Right ventricle myocardium inferior (tissue), 1 donor: ENCODE measurements at regions of chr17 and their contacts with region 1.

Region 1: DNA sequence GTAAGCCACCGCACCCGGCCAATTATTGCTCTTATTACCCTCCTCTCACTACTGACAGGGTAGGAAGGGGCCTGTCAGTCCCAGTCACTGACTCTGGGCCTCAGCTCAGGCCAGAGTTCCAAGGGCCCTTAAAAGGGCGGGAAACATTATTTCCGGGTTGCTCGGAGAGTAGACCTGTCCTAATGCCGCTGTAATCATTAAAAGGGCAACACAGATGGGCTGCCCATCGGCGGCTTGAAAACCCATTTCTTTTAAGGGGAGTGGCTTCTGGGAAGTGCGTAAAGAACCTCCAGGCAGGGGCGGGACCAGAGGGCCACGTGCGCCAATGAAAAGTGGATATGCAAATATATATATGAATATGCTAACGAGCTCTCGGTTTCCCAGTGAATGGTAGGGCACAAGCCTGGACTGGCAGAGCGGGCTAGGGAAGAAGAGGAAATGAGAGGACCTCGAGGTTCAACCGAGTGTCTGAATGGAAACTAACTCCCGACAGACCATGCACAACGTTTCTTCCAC is 26.6 kb downstream of the PIPOX start:
- DNase-seq: peak; percentile 67
- ATAC-seq: peak; percentile 29

Region 2: DNA sequence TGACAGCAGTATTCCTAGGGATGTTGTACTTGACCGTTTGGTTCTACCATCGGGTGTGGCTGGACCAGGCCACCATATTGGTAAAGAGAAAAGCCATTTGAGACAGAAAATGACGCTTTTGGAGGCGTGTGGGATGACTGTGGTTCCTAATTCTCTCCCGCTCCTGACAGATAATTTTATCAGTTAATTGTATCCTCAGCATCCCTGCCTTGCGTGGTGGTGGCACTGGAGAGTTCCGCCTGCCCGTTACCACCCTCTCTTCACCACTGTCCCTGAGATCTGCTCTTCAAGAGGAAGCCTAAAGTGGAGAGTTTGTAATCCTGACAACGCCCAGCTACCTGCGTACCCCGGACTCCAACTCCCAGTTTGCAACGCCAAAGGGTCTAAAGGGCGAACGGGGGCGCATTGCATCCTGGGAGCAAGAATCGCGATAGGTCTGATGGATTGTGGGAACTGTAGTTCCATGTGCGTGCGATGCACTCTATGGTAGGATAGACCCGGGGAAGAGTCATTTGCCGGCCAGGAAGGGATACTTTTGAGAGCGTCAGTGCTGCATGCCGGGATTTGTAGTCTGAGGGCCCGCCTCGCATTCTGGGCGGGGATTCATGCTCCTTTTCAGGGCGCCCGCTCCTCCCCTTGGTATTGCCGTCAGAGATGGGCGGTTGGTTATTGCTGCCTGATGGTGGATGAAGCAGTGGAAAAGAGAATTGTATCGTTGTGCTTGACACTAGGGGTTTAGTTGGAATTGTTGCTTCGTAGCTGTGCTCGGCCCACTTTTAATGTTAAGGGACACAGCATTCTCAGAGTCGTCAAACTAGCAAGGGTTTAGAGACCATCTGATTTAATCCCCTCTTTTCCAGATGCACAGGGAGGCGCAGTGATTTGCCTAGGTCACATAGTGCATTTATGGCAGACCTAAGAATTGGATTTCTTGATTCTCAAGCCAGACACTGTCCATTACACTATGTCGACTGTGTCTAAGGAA is 117.3 kb before region 1 on chr17:
- intact Hi-C with region 1: no loop called
- DNase-seq: peak; percentile 97
- ATAC-seq: peak; percentile 88

Region 3: DNA sequence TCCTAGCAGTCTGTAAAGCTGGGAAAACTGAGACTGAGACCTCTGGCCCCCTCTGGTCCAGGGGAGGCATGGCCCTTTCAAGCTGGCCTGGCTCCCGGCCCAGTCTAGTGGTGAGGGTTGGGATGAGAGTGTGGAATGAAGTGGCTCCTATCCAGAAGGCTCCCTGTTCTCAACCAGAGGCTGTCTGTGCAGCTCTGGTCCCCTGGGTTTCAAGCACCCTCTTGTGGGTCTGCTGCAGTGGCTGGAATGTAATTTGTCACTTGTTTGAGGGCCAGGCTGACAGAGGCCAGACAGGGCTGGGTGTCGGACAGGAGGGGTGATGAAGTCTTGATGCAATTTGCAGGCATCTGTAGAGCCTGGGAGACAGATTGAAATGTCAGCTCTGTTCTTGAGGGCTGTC is 96.2 kb before region 1 on chr17:
- intact Hi-C with region 1: loop called (anchors 5 kb)
- DNase-seq: peak; percentile 90
- ATAC-seq: peak; percentile 86

Region 4: GRCh38 chr17:29102741-29103181 is 33.2 kb after region 1 on chr17:
- intact Hi-C with region 1: loop called (anchors 2 kb)
- DNase-seq: no peak
- ATAC-seq: peak; percentile 18